ENCODE measurements at regions of chr13 and their contacts with region 1.

Region 1: GRCh38 chr13:31236211-31236786 is 36.5 kb downstream of the B3GLCT start:
- DNase-seq: peak; percentile 15
- H3K4me3 ChIP-seq: no peak overlapping the region
- H3K27ac ChIP-seq: no peak overlapping the region
- H3K27me3 ChIP-seq: no peaks in the 10 kb centered on the region
- CTCF ChIP-seq: peak; percentile 81

Region 2: DNA sequence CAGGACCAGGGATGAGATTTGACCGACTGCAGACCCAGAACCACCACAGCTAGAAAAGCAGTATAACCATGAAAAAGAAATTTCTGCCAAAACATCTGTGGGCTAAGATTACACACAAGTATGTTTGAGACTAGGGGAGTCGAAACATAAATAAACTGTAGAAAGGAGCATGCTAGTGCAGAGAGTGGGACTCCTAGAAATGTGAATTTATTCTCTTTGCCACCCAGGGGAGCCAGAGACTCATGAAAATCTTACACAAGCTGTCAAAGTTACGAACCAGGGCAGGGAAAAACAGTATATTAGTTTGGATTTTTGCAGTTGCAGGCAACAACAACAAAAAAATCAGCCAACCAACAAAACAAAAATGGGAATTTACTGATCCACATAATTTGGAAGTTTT is 62.3 kb before region 1 on chr13:
- CTCF ChIA-PET with region 1: interaction called, 20 read pairs
- POLR2A ChIA-PET with region 1: no interaction called
- DNase-seq: peak; percentile 51
- H3K4me3 ChIP-seq: no peak overlapping the region
- H3K27ac ChIP-seq: no peak overlapping the region
- H3K27me3 ChIP-seq: no peaks in the 10 kb centered on the region
- CTCF ChIP-seq: peak; percentile 49; the same call in 1 of the 2 replicates

Region 3: GRCh38 chr13:31221057-31221456 is 15.2 kb before region 1 on chr13:
- CTCF ChIA-PET with region 1: interaction called, 41 read pairs
- POLR2A ChIA-PET with region 1: no interaction called
- DNase-seq: no peak
- H3K4me3 ChIP-seq: no peak overlapping the region
- H3K27ac ChIP-seq: no peak overlapping the region
- H3K27me3 ChIP-seq: no peaks in the 10 kb centered on the region
- CTCF ChIP-seq: no peak

Region 4: GRCh38 chr13:31282741-31283455 is 46.6 kb after region 1 on chr13:
- CTCF ChIA-PET with region 1: interaction called, 12 read pairs
- POLR2A ChIA-PET with region 1: no interaction called
- DNase-seq: no peak
- H3K4me3 ChIP-seq: no peak overlapping the region
- H3K27ac ChIP-seq: no peak overlapping the region
- H3K27me3 ChIP-seq: no peaks in the 10 kb centered on the region
- CTCF ChIP-seq: no peak

Region 5: GRCh38 chr13:31424117-31424729 is 187.9 kb after region 1 on chr13:
- CTCF ChIA-PET with region 1: interaction called, 348 read pairs
- POLR2A ChIA-PET with region 1: no interaction called
- DNase-seq: peak; percentile 48
- H3K4me3 ChIP-seq: no peak overlapping the region
- H3K27ac ChIP-seq: no peak overlapping the region
- H3K27me3 ChIP-seq: peaks cover 12% of the 10 kb centered on the region
- CTCF ChIP-seq: peak; percentile 99

Measured in AG04450 (cell line).